CD8-positive, alpha-beta T cell (primary cell): ENCODE measurements at regions of chr16 and their contacts with region 1.

Region 1: GRCh38 chr16:76756951-76757350 is 434.0 kb upstream of the MON1B start:
- DNase-seq: no peak
- ATAC-seq: no peak
- H3K4me3 ChIP-seq: no peak overlapping the region
- H3K4me3 Mint-ChIP-seq: no peak overlapping the region
- H3K27ac ChIP-seq: no peak overlapping the region
- H3K27ac Mint-ChIP-seq: no peak overlapping the region
- H3K4me1 ChIP-seq: no peaks in the 10 kb centered on the region
- H3K4me1 Mint-ChIP-seq: no peaks in the 10 kb centered on the region
- H3K27me3 ChIP-seq: no peaks in the 10 kb centered on the region
- H3K27me3 Mint-ChIP-seq: no peaks in the 10 kb centered on the region
- CTCF ChIP-seq: no peak

Region 2: GRCh38 chr16:76724181-76724580 is 32.8 kb before region 1 on chr16:
- CTCF ChIA-PET with region 1: no interaction called
- POLR2A ChIA-PET with region 1: no interaction called
- intact Hi-C with region 1: loop called in 1 of 2 experiments (anchors 2 kb)
- DNase-seq: no peak
- ATAC-seq: no peak
- H3K4me3 ChIP-seq: no peak overlapping the region
- H3K4me3 Mint-ChIP-seq: no peak overlapping the region
- H3K27ac ChIP-seq: no peak overlapping the region
- H3K27ac Mint-ChIP-seq: no peak overlapping the region
- H3K4me1 ChIP-seq: no peaks in the 10 kb centered on the region
- H3K4me1 Mint-ChIP-seq: no peaks in the 10 kb centered on the region
- H3K27me3 ChIP-seq: no peaks in the 10 kb centered on the region
- H3K27me3 Mint-ChIP-seq: no peaks in the 10 kb centered on the region
- CTCF ChIP-seq: no peak